ENCODE measurements at regions of chr3 and their contacts with region 1.

Region 1: DNA sequence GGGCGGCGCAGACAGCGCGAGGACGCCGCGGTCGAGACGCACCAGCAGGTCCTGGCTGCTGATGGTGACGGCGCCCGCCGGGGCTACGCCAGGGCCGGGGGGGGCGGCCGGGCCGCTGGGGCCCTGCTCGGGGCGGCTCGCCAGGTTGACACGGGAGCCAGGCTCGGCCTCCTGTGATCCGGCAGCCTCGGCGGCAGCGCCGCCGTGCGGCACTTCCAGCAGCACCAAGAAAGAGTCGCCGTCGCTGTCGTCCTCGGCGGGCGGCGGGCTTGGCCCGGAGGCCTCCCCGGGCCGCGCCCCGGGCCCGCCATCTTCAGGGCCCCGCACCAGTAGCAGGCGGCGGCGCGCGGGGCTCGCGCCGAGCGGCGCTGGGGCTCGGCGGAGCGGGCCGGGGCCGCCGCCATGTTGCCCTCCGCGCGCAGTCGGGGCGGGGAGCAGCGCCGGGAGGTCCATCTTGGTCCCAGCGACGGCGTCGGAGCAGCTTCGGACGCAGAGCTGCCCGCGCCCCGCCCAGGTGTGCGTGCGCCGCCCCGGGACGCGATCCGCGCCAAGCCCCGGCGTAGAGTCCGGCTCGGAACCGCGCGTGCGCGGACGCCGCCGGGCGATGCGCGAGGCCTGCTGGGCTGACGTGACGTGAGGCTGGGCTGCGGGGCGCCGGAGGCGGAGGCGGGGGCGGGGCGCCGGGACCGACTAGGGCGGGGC is at the start of gene ZXDC:
- DNase-seq: peak; percentile 69 to 97
- H3K4me3 ChIP-seq: peak within 1 kb of the TSS; percentile 63 to 71
- H3K27ac ChIP-seq: peak within 1 kb of the TSS; percentile 88 to 99
- H3K4me1 ChIP-seq: peaks cover 27 to 35% of the 10 kb centered on the region in 2 donors
- H3K27me3 ChIP-seq: no peaks in the 10 kb centered on the region
- CTCF ChIP-seq: peak; percentile 14 to 49 (median 37)
- total RNA-seq, gene ZXDC: 74.4 TPM

Region 2: GRCh38 chr3:126083913-126084767 is 391.4 kb before region 1 on chr3 and contains the start of gene SLC41A3:
- intact Hi-C with region 1: loop called (anchors 5 kb)
- DNase-seq: peak; percentile 58 to 95
- H3K4me3 ChIP-seq: peak within 1 kb of the TSS; percentile 79 to 85
- H3K27ac ChIP-seq: peak within 1 kb of the TSS; percentile 93 to 94
- H3K4me1 ChIP-seq: peaks cover 0 to 4% of the 10 kb centered on the region in 2 donors
- H3K27me3 ChIP-seq: no peaks in the 10 kb centered on the region
- CTCF ChIP-seq: peak; percentile 33 to 49 (median 38)
- total RNA-seq, gene SLC41A3: 111 TPM

Region 3: DNA sequence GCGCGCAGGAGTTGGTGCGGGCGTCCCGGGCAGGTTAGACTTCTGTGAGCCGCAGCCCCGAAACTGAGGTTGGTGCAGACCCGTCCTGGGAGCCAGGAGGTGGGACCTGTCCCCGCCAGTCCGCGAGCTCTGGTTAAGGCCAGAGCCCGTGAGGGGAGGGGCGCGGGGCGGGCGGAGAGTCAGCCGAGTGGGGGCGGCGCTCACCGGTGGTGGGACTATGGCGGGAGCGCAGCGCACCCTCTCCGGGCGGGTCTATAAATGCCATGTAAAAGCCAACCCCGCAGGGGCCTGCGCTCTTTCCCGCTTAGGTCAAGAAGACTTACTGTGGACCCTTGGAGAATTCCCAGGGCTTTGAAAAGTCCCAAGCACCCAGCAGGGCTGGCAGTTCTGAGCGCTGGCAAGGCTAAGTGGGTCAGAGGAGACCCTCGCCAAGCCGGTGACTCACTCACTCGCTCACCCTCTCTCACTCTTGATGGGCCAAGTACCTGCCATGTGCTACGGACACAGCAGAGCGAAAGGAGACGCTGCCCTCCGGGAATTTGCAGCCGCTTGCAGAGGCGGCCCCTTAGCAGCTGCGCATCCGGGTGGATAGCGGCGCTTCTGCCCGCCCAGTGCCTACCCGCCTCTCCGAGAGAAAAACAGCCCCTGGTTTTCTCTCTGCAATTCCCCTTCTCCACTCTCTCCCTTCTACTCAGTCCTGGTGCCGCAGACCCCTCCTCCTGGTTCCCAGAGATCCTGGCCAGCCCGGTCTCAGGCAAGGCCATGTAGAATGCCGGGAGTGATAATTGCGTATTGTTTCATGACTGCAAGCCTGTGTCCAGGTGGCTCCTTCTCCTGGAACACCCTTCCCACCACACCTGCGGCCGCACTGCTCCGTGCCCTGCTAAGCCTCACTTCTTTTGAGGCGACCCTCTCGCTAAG is 294.8 kb before region 1 on chr3 and contains the start of gene ALDH1L1:
- intact Hi-C with region 1: loop called (anchors 1 kb)
- DNase-seq: peak; percentile 73 to 96
- H3K4me3 ChIP-seq: peak within 1 kb of the TSS; percentile 74 to 90
- H3K27ac ChIP-seq: peak within 1 kb of the TSS; percentile 98 to 99
- H3K4me1 ChIP-seq: peaks cover 10 to 15% of the 10 kb centered on the region in 2 donors
- H3K27me3 ChIP-seq: no peaks in the 10 kb centered on the region
- CTCF ChIP-seq: no peak
- total RNA-seq, gene ALDH1L1: 36.1 TPM

Region 4: GRCh38 chr3:126245811-126246727 is 229.5 kb before region 1 on chr3:
- intact Hi-C with region 1: loop called (anchors 5 kb)
- DNase-seq: peak in 1 of 2 donors; percentile 74
- H3K4me3 ChIP-seq: no peak overlapping the region
- H3K27ac ChIP-seq: no peak overlapping the region
- H3K4me1 ChIP-seq: no peaks in the 10 kb centered on the region
- H3K27me3 ChIP-seq: no peaks in the 10 kb centered on the region
- CTCF ChIP-seq: peak; percentile 26 to 55 (median 44)

Region 5: DNA sequence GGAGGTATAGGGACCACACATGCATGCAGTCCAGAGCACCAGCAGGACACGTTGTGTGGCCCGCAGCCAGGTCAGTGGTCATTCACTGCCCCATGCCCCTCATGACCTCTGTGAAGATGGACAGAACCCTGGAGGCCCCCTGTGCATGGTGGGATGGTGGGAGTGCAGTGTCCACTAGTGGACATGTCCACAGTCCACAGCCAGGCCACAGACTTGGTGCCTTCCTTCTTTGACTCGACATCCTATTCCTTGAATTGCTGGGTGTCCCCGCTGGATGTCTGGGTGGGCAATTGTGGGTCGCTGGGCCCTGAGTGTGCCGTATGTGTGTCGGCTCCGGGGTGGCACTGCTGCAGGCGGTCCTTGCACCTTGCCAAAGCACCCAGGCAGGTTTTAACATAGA is 154.1 kb before region 1 on chr3:
- intact Hi-C with region 1: no loop called
- DNase-seq: peak in 1 of 2 donors; percentile 37
- H3K4me3 ChIP-seq: no peak overlapping the region
- H3K27ac ChIP-seq: no peak overlapping the region
- H3K4me1 ChIP-seq: no peaks in the 10 kb centered on the region
- H3K27me3 ChIP-seq: no peaks in the 10 kb centered on the region
- CTCF ChIP-seq: no peak

Region 6: DNA sequence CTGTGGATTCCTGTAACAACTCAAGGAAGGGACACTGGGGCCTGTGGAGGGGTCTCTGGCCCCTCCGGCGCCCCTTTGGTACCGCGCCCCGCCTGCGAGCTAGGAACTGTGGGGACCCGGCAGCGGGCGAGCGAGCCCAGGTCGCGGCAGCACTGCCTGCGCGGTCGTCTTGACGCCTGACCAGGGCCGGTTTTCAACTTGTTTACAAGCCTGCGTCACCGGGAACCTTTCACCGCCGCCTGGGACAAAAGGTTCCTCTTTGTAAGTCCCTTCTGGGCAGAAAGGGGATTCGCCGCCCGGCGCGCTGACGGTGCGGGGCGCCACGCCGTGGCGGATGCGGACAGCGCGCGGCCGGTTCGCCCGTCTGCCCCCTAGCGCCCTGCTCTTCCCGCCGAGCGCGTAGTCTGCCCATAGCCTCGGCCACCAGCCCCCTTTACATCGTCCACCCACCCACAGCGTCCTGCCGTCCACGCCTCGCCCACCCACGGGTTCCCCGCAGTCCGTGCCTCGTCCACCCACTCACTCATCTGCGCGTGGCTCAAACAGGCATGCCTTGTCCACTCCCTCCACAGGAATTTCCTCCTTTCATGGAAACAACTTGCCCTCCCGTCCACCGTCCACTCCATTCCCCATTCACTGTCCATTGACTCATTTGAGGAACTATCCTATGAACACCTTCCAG is 86.3 kb before region 1 on chr3:
- intact Hi-C with region 1: loop called (anchors 2 kb)
- DNase-seq: peak; percentile 82 to 98
- H3K4me3 ChIP-seq: peak overlapping the region; percentile 39 to 61
- H3K27ac ChIP-seq: peak overlapping the region; percentile 90 to 93
- H3K4me1 ChIP-seq: peaks cover 4 to 6% of the 10 kb centered on the region in 2 donors
- H3K27me3 ChIP-seq: no peaks in the 10 kb centered on the region
- CTCF ChIP-seq: peak; percentile 96 to 99 (median 97)

Region 7: GRCh38 chr3:126419886-126420786 is 55.4 kb before region 1 on chr3:
- intact Hi-C with region 1: no loop called
- DNase-seq: peak in 1 of 2 donors; percentile 58
- H3K4me3 ChIP-seq: no peak overlapping the region
- H3K27ac ChIP-seq: no peak overlapping the region
- H3K4me1 ChIP-seq: no peaks in the 10 kb centered on the region
- H3K27me3 ChIP-seq: no peaks in the 10 kb centered on the region
- CTCF ChIP-seq: no peak

Region 8: GRCh38 chr3:126493739-126494138 is 18.2 kb after region 1 on chr3:
- intact Hi-C with region 1: no loop called
- DNase-seq: no peak
- H3K4me3 ChIP-seq: no peak overlapping the region
- H3K27ac ChIP-seq: no peak overlapping the region
- H3K4me1 ChIP-seq: no peaks in the 10 kb centered on the region
- H3K27me3 ChIP-seq: no peaks in the 10 kb centered on the region
- CTCF ChIP-seq: no peak

Region 9: GRCh38 chr3:126508539-126508938 is 33.0 kb after region 1 on chr3:
- intact Hi-C with region 1: no loop called
- DNase-seq: no peak
- H3K4me3 ChIP-seq: no peak overlapping the region
- H3K27ac ChIP-seq: no peak overlapping the region
- H3K4me1 ChIP-seq: no peaks in the 10 kb centered on the region
- H3K27me3 ChIP-seq: no peaks in the 10 kb centered on the region
- CTCF ChIP-seq: no peak